ENCODE measurements at regions of chr1 and their contacts with region 1.

Region 1: DNA sequence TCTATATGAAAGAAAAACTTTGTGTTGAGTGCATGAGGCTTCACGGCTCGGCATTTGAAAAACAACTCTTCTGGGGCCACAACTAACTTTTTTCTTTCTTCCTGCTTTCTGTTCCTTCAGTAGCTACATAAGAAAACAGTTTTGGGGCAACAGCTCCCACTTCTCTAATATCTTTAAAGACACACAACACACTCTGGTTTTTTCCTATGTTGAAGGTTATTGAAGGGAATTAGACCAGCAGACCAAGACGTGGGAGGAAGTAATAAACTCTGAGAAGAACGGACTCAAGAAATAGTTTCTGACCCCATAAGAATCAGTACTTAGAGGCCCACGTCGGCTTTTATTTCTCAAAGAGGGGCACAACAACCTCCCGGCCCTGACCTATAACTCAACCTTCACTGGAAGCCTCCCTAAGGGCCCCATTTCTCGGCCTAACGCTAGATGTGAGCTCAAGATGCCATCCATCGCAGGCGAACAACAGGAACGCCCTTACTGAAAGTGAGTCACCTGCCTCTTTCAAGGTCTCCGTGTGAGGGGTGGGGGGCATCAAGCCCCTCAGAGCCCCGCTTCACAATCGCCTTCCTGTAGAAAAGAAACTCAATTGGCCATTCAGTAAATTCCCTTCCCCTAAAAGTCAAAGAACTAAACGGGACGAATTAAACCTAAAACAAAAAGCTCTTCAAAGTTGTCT is 844 bp downstream of the ZMYM6 start:
- DNase-seq: peak; percentile 5
- ATAC-seq: peak; percentile 46
- H3K4me3 ChIP-seq: peak overlapping the region; percentile 81 to 86 (median 84)
- H3K27ac ChIP-seq: peak overlapping the region; percentile 71
- H3K4me1 ChIP-seq: peaks cover 12% of the 10 kb centered on the region
- H3K27me3 ChIP-seq: no peaks in the 10 kb centered on the region; a peak in 1 of 5 replicates
- CTCF ChIP-seq: no peak
- EP300 ChIP-seq: no peak
- POLR2A ChIP-seq: no peak
- RAD21 ChIP-seq: no peak

Region 2: DNA sequence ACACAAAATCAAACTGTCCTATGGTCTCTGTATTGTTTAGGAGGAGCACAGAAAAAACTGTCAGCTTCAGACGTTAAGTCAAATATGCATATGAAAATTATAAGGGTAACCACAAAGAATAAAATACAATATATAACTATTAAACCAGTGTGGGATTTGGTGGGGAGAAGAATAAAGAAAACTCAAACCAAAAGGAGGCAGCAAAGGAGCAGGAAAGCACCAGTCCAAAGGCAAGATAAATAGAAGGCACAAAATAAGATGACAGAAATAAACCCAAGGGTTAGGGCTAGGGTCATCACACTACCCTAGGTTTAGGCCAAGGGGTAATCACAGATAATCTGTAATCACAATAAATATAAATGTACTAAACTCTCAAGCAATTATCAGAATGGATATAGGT is 134.3 kb before region 1 on chr1:
- CTCF ChIA-PET with region 1: no interaction called
- POLR2A ChIA-PET with region 1: no interaction called
- in situ Hi-C with region 1: no loop called
- intact Hi-C with region 1: no loop called
- DNase-seq: no peak
- ATAC-seq: no peak
- H3K4me3 ChIP-seq: no peak overlapping the region
- H3K27ac ChIP-seq: no peak overlapping the region
- H3K4me1 ChIP-seq: peaks cover under 1% of the 10 kb centered on the region; the same call in 1 of the 2 replicates
- H3K27me3 ChIP-seq: peaks cover 2 to 24% of the 10 kb centered on the region in 2 experiments; a peak in 4 of 5 replicates
- CTCF ChIP-seq: 0 out of 2 replicates have a peak, but pooled peaks have one; percentile 22
- EP300 ChIP-seq: no peak
- POLR2A ChIP-seq: no peak
- RAD21 ChIP-seq: no peak

Region 3: DNA sequence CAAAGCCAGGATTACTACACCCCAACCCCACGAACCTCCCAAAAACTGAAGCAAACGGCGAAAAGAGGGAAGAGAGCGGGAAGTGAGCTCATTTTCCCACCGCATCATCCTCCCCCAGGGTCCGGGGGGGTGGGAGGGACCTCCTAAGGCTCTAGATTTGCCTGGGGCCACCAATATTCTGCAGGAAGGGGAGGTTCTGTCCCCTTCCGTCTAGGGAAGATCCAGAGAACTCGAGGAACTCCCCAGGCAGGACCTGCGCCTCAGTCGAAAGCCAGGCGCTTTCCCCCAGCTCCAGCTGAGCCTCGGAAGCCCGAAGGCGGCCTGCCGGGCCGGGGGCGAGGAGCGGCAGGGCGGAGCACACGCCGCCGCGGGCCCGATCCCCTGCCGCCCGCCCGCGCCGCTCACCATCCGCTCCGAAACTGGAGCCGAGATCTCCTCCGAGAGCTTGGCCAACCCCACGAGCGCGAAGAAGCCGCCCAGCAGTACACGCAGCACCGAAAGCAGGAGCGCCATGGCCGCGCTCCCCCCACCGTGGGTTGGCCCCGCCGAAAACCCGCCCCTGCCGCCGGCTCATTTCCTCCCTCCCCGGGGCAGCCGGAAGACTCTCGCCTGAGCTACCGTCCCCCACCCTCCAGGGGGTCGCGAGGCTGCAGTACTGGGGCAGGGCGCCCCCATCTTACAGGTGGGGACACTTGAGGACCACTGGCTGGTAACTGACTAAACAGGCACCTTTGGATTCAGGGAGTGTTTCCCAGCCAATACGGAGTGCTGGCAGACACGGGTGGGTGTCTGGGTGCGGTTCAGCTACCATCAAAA is 45.9 kb before region 1 on chr1 and contains the start of gene TMEM35B:
- CTCF ChIA-PET with region 1: no interaction called
- POLR2A ChIA-PET with region 1: interaction called, 15 read pairs
- in situ Hi-C with region 1: no loop called
- intact Hi-C with region 1: loop called (anchors 5 kb)
- DNase-seq: peak; percentile 13
- ATAC-seq: peak; percentile 80
- H3K4me3 ChIP-seq: peak within 1 kb of the TSS; percentile 75 to 87 (median 82)
- H3K27ac ChIP-seq: peak within 1 kb of the TSS; percentile 34
- H3K4me1 ChIP-seq: peaks cover 26% of the 10 kb centered on the region
- H3K27me3 ChIP-seq: no peaks in the 10 kb centered on the region
- CTCF ChIP-seq: peak; percentile 49
- EP300 ChIP-seq: no peak
- POLR2A ChIP-seq: peak in 1 of 2 experiments; percentile 73; a peak in 3 of 4 replicates
- RAD21 ChIP-seq: peak; percentile 40; the same call in 1 of the 2 replicates
- total RNA-seq, gene TMEM35B: 4.5 and 11.5 TPM in 2 replicates

Region 4: GRCh38 chr1:35058990-35059389 is 28.1 kb after region 1 on chr1:
- CTCF ChIA-PET with region 1: no interaction called
- POLR2A ChIA-PET with region 1: no interaction called
- in situ Hi-C with region 1: no loop called
- intact Hi-C with region 1: loop called (anchors 1 kb)
- DNase-seq: no peak
- ATAC-seq: no peak
- H3K4me3 ChIP-seq: no peak overlapping the region
- H3K27ac ChIP-seq: no peak overlapping the region
- H3K4me1 ChIP-seq: no peaks in the 10 kb centered on the region
- H3K27me3 ChIP-seq: no peaks in the 10 kb centered on the region
- CTCF ChIP-seq: no peak
- EP300 ChIP-seq: no peak
- POLR2A ChIP-seq: no peak
- RAD21 ChIP-seq: no peak

Region 5: GRCh38 chr1:35079003-35079930 is 48.4 kb after region 1 on chr1 and contains the start of gene ZMYM1:
- CTCF ChIA-PET with region 1: no interaction called
- POLR2A ChIA-PET with region 1: interaction called, 14 read pairs
- in situ Hi-C with region 1: no loop called
- intact Hi-C with region 1: no loop called
- DNase-seq: peak; percentile 73
- ATAC-seq: peak; percentile 95
- H3K4me3 ChIP-seq: peak within 1 kb of the TSS; percentile 79 to 88 (median 85)
- H3K27ac ChIP-seq: peak within 1 kb of the TSS; percentile 81
- H3K4me1 ChIP-seq: peaks cover 18% of the 10 kb centered on the region
- H3K27me3 ChIP-seq: no peaks in the 10 kb centered on the region; a peak in 1 of 5 replicates
- CTCF ChIP-seq: no peak
- EP300 ChIP-seq: no peak
- POLR2A ChIP-seq: peak in 1 of 2 experiments; percentile 75
- RAD21 ChIP-seq: no peak
- total RNA-seq, gene ZMYM1: 16.2 and 22.8 TPM in 2 replicates

Region 6: GRCh38 chr1:35192853-35193664 is 162.2 kb after region 1 on chr1 and contains the start of gene SFPQ:
- CTCF ChIA-PET with region 1: no interaction called
- POLR2A ChIA-PET with region 1: no interaction called
- in situ Hi-C with region 1: no loop called
- intact Hi-C with region 1: loop called (anchors 5 kb)
- DNase-seq: peak; percentile 97
- ATAC-seq: peak; percentile 93
- H3K4me3 ChIP-seq: peak within 1 kb of the TSS; percentile 94 to 100 (median 99)
- H3K27ac ChIP-seq: peak within 1 kb of the TSS; percentile 88
- H3K4me1 ChIP-seq: peaks cover 52% of the 10 kb centered on the region
- H3K27me3 ChIP-seq: no peaks in the 10 kb centered on the region; a peak in 1 of 5 replicates
- CTCF ChIP-seq: peak; percentile 19; the same call in 1 of the 2 replicates
- EP300 ChIP-seq: no peak
- POLR2A ChIP-seq: peak; percentile 100
- RAD21 ChIP-seq: no peak
- total RNA-seq, gene SFPQ: 260 and 292 TPM in 2 replicates

Measured in HepG2 (cell line).